WTC11 (cell line): ENCODE measurements at regions of chr17 and their contacts with region 1.

Region 1: GRCh38 chr17:33992113-33992512 is 263.0 kb upstream of the CCL2 start:
- DNase-seq: no peak
- ATAC-seq: no peak
- H3K4me3 Mint-ChIP-seq: no peak overlapping the region
- H3K27ac Mint-ChIP-seq: no peak overlapping the region
- H3K4me1 Mint-ChIP-seq: peaks cover 18% of the 10 kb centered on the region
- H3K27me3 Mint-ChIP-seq: peaks cover 3% of the 10 kb centered on the region; the same call in 1 of the 2 replicates
- CTCF ChIP-seq: no peak

Region 2: DNA sequence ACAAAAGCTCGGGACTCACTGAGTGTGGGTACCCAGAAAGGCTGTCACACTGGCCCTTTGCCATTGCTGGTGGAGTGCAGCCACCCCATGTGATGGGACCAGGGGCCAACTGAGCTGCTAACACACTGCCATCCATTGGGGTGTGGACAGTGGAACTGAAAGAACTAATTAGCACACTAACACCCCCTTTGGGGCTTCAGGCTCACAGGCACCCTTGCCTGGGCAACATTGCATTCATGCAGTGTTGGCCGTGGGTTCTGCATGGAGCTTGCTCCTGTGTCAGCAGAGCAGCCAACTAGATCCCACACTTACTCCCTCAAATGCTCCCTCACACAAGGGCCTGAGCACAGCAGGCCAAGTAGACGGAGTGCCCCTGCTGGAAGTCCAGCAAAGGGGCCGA is 223.0 kb before region 1 on chr17:
- CTCF ChIA-PET with region 1: no interaction called
- POLR2A ChIA-PET with region 1: no interaction called
- DNase-seq: no peak
- ATAC-seq: no peak
- H3K4me3 Mint-ChIP-seq: no peak overlapping the region
- H3K27ac Mint-ChIP-seq: no peak overlapping the region
- H3K4me1 Mint-ChIP-seq: no peaks in the 10 kb centered on the region
- H3K27me3 Mint-ChIP-seq: peaks cover 2% of the 10 kb centered on the region; the same call in 1 of the 2 replicates
- CTCF ChIP-seq: no peak

Region 3: DNA sequence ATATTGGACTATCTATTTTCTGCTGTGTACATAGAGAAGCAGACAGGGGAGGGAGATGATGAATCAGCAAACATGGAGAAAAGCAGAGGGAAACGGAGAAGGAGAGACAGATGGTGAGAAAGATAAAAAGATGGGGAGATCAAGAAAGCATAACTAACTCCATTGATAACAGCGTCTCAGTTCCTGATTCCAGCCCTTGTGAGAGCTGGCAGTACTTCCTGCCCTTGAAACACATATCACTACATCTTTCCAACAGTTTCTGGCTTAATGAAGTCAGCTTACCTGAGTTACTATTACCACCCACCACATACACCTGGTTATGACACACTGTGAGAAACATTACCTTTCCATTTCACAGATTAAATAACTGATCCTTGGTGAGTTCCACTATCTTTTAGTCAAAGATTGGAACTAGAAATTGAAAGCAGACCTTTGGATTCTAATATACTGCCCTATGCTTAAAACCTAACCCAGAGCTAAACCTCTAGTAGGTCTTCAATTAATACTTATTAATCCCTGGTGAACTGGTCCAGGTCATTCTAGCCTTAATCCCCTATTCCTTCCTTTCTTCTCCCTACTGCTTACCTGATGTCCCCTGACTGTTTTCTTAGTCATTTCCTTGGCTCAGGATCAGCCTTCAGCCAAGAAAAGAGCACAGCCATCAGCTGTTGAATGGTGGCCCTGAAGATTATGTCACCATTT is 83.6 kb before region 1 on chr17:
- CTCF ChIA-PET with region 1: no interaction called
- POLR2A ChIA-PET with region 1: interaction called, 11 read pairs
- DNase-seq: no peak
- ATAC-seq: no peak
- H3K4me3 Mint-ChIP-seq: no peak overlapping the region
- H3K27ac Mint-ChIP-seq: no peak overlapping the region
- H3K4me1 Mint-ChIP-seq: peaks cover 4% of the 10 kb centered on the region
- H3K27me3 Mint-ChIP-seq: no peaks in the 10 kb centered on the region
- CTCF ChIP-seq: no peak

Region 4: GRCh38 chr17:34006126-34006525 is 14.0 kb after region 1 on chr17:
- CTCF ChIA-PET with region 1: no interaction called
- POLR2A ChIA-PET with region 1: no interaction called
- DNase-seq: no peak
- ATAC-seq: no peak
- H3K4me3 Mint-ChIP-seq: no peak overlapping the region
- H3K27ac Mint-ChIP-seq: no peak overlapping the region
- H3K4me1 Mint-ChIP-seq: no peaks in the 10 kb centered on the region; the same call in 1 of the 2 replicates
- H3K27me3 Mint-ChIP-seq: no peaks in the 10 kb centered on the region; the same call in 1 of the 2 replicates
- CTCF ChIP-seq: no peak